Breast epithelium (tissue), 4 donors: ENCODE measurements at regions of chr6 and their contacts with region 1.

Region 1: GRCh38 chr6:28446818-28447511 is 3.7 kb upstream of the ZSCAN23 start:
- DNase-seq: no peak
- H3K4me3 ChIP-seq: peak overlapping the region in 2 of 3 donors; percentile 42 to 62
- H3K27ac ChIP-seq: no peak overlapping the region
- H3K4me1 ChIP-seq: no peaks in the 10 kb centered on the region
- H3K27me3 ChIP-seq: peaks cover 0 to 27% of the 10 kb centered on the region in 2 donors
- CTCF ChIP-seq: no peak
- POLR2A ChIP-seq: no peak

Region 2: GRCh38 chr6:28657769-28658465 is 211.0 kb after region 1 on chr6:
- intact Hi-C with region 1: loop called (anchors 5 kb)
- DNase-seq: no peak
- H3K4me3 ChIP-seq: peak overlapping the region; percentile 32 to 65 (median 44)
- H3K27ac ChIP-seq: no peak overlapping the region
- H3K4me1 ChIP-seq: no peaks in the 10 kb centered on the region
- H3K27me3 ChIP-seq: peaks cover 0 to 28% of the 10 kb centered on the region in 2 donors
- CTCF ChIP-seq: no peak
- POLR2A ChIP-seq: no peak